Cardiac septum (tissue), 1 donor: ENCODE measurements at regions of chr17 and their contacts with region 1.

Region 1: GRCh38 chr17:82320956-82321927 is 3.8 kb upstream of the CD7 start:
- DNase-seq: no peak

Region 2: GRCh38 chr17:82205719-82206508 is 115.3 kb before region 1 on chr17:
- intact Hi-C with region 1: loop called (anchors 5 kb)
- DNase-seq: peak; percentile 93

Region 3: GRCh38 chr17:82273327-82274133 is 47.7 kb before region 1 on chr17 and contains the start of gene CSNK1D:
- intact Hi-C with region 1: no loop called
- DNase-seq: peak; percentile 96
- total RNA-seq, gene CSNK1D: 80.9 TPM